ENCODE measurements at regions of chr5 and their contacts with region 1.

Region 1: DNA sequence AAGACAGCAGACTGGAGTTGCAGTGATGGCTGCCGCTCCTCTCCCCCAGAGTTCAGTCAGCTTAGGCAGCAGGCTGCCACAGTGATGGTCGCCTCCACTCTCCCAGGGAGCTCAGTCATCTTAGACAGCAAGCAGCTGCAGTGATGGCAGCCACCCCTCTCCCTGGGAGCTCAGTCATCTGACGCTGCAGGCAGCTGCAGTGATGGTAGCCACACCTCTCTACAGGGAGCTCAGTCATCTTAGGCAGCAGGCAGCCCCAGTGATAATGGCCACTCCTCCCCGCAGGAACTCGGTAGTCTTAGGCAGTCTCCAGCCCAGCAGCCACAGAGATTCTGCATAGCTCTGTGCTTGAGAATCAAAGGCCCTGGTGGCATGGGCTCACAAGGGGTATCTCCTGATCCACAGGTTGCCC is 582.7 kb downstream of the DTWD2 start:
- DNase-seq: peak in 4 of 5 donors; percentile 19 to 57 (median 42)
- ATAC-seq: peak in 3 of 4 donors; percentile 57 to 76 (median 64)
- H3K4me3 ChIP-seq: no peak overlapping the region
- H3K27ac ChIP-seq: no peak overlapping the region
- H3K4me1 ChIP-seq: peaks cover 0 to 17% (median 6%) of the 10 kb centered on the region in 12 donors
- H3K27me3 ChIP-seq: no peaks in the 10 kb centered on the region
- CTCF ChIP-seq: no peak
- POLR2A ChIP-seq: no peak

Region 2: GRCh38 chr5:118185018-118185417 is 220.6 kb before region 1 on chr5:
- intact Hi-C with region 1: no loop called
- DNase-seq: no peak
- ATAC-seq: no peak
- H3K4me3 ChIP-seq: no peak overlapping the region
- H3K27ac ChIP-seq: no peak overlapping the region
- H3K4me1 ChIP-seq: no peaks in the 10 kb centered on the region
- H3K27me3 ChIP-seq: no peaks in the 10 kb centered on the region
- CTCF ChIP-seq: no peak
- POLR2A ChIP-seq: no peak

Region 3: GRCh38 chr5:118593003-118593328 is 187.3 kb after region 1 on chr5:
- intact Hi-C with region 1: loop called in 1 of 10 experiments (anchors 10 kb)
- DNase-seq: no peak
- ATAC-seq: no peak
- H3K4me3 ChIP-seq: no peak overlapping the region
- H3K27ac ChIP-seq: no peak overlapping the region
- H3K4me1 ChIP-seq: peaks cover 0 to 11% (median 0%) of the 10 kb centered on the region in 12 donors
- H3K27me3 ChIP-seq: no peaks in the 10 kb centered on the region
- CTCF ChIP-seq: peak in 2 of 12 donors; percentile 8 to 19
- POLR2A ChIP-seq: no peak

Measured in heart left ventricle (tissue), 16 donors.